Activated CD4-positive, alpha-beta memory T cell treated with anti-CD3 and anti-CD28 coated beads for 36 hours (primary cell): ENCODE measurements at regions of chr12 and their contacts with region 1.

Region 1: GRCh38 chr12:67441736-67442346 is 172.7 kb downstream of the CAND1 start:
- DNase-seq: peak; percentile 89
- H3K4me3 Mint-ChIP-seq: peak overlapping the region; percentile 35
- H3K27ac Mint-ChIP-seq: peak overlapping the region; percentile 44
- H3K4me1 Mint-ChIP-seq: peaks cover 21% of the 10 kb centered on the region
- H3K27me3 Mint-ChIP-seq: peaks cover 4% of the 10 kb centered on the region

Region 2: GRCh38 chr12:67161322-67161918 is 280.4 kb before region 1 on chr12:
- CTCF ChIA-PET with region 1: interaction called, 3 read pairs
- POLR2A ChIA-PET with region 1: no interaction called
- intact Hi-C with region 1: loop called (anchors 1 kb)
- DNase-seq: peak; percentile 45
- H3K4me3 Mint-ChIP-seq: no peak overlapping the region
- H3K27ac Mint-ChIP-seq: no peak overlapping the region
- H3K4me1 Mint-ChIP-seq: no peaks in the 10 kb centered on the region
- H3K27me3 Mint-ChIP-seq: peaks cover 2% of the 10 kb centered on the region

Region 3: DNA sequence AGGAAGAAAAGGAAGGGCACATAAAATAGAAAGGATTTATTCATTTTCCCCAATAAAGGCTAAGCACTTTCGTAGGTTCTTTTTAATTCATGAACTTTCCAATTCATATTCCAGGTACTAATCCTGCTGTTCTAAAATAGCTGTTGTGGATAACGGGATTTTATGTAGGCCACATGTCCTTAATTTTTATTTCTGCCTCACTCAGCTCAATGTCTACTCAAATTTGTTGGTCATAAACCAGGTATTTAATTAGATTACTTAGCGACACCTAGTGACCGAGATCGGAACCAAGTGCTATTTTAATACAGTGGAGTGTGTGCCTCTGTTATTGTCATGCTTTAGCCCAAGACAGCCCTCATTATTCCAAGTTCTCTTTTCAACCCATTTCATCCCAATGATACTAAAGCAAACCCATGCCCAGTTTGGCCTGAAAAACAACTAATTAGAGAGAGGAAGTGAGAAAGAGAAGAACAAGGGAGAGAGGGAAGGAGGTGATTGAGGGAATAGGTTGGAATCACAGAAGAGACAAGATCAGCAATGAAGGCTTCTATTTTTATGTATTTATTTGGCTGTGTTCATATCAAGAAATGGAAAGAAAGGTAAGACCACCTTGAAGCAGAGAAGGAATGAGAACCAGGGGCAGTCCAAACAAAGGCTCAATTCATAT is 501.5 kb after region 1 on chr12:
- CTCF ChIA-PET with region 1: interaction called, 15 read pairs
- POLR2A ChIA-PET with region 1: no interaction called
- intact Hi-C with region 1: loop called (anchors 5 kb)
- DNase-seq: peak; percentile 57
- H3K4me3 Mint-ChIP-seq: no peak overlapping the region
- H3K27ac Mint-ChIP-seq: no peak overlapping the region
- H3K4me1 Mint-ChIP-seq: peaks cover 2% of the 10 kb centered on the region
- H3K27me3 Mint-ChIP-seq: peaks cover 8% of the 10 kb centered on the region